Activated CD4-positive, alpha-beta memory T cell treated with anti-CD3 and anti-CD28 coated beads for 36 hours (primary cell): ENCODE measurements at regions of chr22 and their contacts with region 1.

Region 1: GRCh38 chr22:49767355-49768062 is 60.2 kb downstream of the BRD1 start:
- DNase-seq: peak; percentile 53
- H3K4me3 Mint-ChIP-seq: no peak overlapping the region
- H3K27ac Mint-ChIP-seq: peak overlapping the region; percentile 2
- H3K4me1 Mint-ChIP-seq: peaks cover 9% of the 10 kb centered on the region
- H3K27me3 Mint-ChIP-seq: no peaks in the 10 kb centered on the region

Region 2: GRCh38 chr22:49676783-49677494 is 90.6 kb before region 1 on chr22:
- CTCF ChIA-PET with region 1: no interaction called
- POLR2A ChIA-PET with region 1: no interaction called
- intact Hi-C with region 1: no loop called
- DNase-seq: no peak
- H3K4me3 Mint-ChIP-seq: no peak overlapping the region
- H3K27ac Mint-ChIP-seq: no peak overlapping the region
- H3K4me1 Mint-ChIP-seq: peaks cover under 1% of the 10 kb centered on the region
- H3K27me3 Mint-ChIP-seq: peaks cover 11% of the 10 kb centered on the region

Region 3: DNA sequence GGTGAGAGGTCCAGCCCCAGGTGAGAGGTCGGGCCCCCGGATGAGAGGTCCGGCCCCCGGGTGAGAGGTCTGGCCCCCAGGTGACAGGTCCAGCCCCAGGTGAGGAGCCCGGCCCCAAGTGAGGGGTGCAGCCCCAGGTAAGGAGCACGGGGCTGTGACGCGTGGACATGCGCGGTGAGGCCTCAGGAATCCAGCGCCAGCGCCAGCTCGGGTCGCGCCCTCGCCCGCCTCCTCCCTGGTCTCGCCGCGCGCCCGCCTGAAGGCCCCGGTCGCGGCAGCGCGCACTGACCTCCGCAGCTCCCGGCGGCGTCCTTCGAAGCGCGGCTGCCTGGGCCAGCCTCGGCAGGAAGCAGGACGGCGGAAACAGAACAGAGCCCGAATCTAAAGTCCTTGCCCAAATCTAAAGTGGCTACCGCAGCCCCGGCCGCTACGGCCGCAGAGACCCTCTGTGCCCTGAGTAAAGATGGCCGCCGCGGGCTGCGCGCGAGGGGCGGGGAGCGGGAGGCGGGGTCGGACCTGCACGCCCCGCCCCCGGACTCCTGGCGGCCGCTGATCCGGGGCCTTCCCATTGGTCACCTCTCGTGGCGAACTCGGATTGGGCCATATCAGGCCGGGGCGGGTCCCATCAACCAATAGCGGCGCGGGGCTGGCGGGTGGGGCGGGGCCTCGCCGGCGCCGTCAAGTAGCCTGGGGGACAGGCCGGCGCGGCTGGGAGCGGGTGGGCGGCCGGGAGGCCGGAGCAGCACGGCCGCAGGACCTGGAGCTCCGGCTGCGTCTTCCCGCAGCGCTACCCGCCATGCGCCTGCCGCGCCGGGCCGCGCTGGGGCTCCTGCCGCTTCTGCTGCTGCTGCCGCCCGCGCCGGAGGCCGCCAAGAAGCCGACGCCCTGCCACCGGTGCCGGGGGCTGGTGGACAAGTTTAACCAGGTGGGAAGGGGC is 150.7 kb after region 1 on chr22 and contains the starts of genes ALG12 and CRELD2:
- CTCF ChIA-PET with region 1: interaction called, 12 read pairs
- POLR2A ChIA-PET with region 1: interaction called, 4 read pairs
- intact Hi-C with region 1: loop called (anchors 2 kb)
- DNase-seq: peak; percentile 98
- H3K4me3 Mint-ChIP-seq: peak within 1 kb of the TSS; percentile 79
- H3K27ac Mint-ChIP-seq: peak within 1 kb of the TSS; percentile 79
- H3K4me1 Mint-ChIP-seq: peaks cover 25% of the 10 kb centered on the region
- H3K27me3 Mint-ChIP-seq: no peaks in the 10 kb centered on the region
- total RNA-seq, gene ALG12: 12.4 to 13.8 TPM
- total RNA-seq, gene CRELD2: 29.8 to 30.7 TPM

Region 4: DNA sequence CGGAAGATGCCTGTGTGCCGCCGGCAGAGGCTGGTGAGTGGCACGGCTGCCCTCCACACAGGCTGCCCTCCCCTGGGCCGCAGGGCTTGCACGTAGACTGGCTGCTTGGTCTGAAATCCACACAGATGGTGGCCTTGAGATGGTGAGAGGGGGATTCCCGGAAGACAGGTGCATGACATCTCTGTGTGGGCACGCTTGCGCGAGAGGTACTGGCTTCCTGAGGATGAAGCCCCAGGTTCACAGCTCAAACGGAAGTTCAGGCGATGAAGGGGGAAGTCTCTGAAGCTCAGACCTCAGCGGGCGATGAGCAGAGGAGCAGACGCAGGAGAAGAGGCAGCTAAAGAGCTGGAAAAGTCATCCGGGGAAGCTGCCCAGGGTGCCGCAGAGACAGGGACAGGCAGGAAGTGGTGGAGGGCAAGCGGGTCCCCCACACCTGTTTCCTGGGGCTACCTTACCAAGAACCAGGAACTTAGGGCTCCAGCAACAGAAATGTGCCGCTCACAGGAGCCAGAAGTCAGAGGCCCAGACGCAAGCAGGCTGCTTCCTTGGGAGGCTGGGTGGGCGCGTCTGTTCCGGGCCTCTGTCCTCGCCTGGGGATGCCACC is 158.1 kb after region 1 on chr22:
- CTCF ChIA-PET with region 1: interaction called, 10 read pairs
- POLR2A ChIA-PET with region 1: no interaction called
- intact Hi-C with region 1: no loop called
- DNase-seq: peak; percentile 77
- H3K4me3 Mint-ChIP-seq: peak overlapping the region; percentile 68
- H3K27ac Mint-ChIP-seq: peak overlapping the region; percentile 88
- H3K4me1 Mint-ChIP-seq: peaks cover 28% of the 10 kb centered on the region
- H3K27me3 Mint-ChIP-seq: no peaks in the 10 kb centered on the region

Region 5: DNA sequence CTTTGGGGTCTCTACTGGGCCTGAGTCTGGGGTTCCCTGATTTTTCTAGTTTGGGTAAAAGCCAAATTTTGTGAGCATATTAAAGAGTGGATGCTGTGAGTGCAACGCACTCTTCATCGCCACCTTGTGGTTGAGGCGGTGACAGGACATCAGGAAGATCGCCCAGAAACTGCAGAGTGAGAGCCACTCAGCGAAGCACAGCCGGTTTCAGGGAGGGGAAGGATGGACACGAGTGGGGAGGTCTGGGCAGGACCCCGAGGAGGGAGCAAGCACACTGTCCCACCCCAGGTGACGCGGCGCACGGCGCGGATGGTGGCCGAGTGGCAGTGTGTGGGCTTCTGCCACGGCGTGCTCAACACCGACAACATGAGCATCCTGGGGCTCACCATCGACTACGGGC is 442.4 kb after region 1 on chr22:
- CTCF ChIA-PET with region 1: no interaction called
- POLR2A ChIA-PET with region 1: no interaction called
- intact Hi-C with region 1: loop called (anchors 5 kb)
- DNase-seq: peak; percentile 76
- H3K4me3 Mint-ChIP-seq: no peak overlapping the region
- H3K27ac Mint-ChIP-seq: peak overlapping the region; percentile 55
- H3K4me1 Mint-ChIP-seq: peaks cover 10% of the 10 kb centered on the region
- H3K27me3 Mint-ChIP-seq: no peaks in the 10 kb centered on the region